PC-9 (cell line): ENCODE measurements at regions of chr17 and their contacts with region 1.

Region 1: GRCh38 chr17:39631403-39631802 is 4.7 kb downstream of the PPP1R1B start:
- DNase-seq: peak; percentile 25 to 56
- H3K4me3 ChIP-seq: peak overlapping the region; percentile 26; the same call in 1 of the 2 replicates
- H3K27ac ChIP-seq: peak overlapping the region; percentile 37; the same call in 1 of the 2 replicates
- H3K4me1 ChIP-seq: peaks cover 28% of the 10 kb centered on the region
- H3K27me3 ChIP-seq: no peaks in the 10 kb centered on the region
- CTCF ChIP-seq: no peak

Region 2: DNA sequence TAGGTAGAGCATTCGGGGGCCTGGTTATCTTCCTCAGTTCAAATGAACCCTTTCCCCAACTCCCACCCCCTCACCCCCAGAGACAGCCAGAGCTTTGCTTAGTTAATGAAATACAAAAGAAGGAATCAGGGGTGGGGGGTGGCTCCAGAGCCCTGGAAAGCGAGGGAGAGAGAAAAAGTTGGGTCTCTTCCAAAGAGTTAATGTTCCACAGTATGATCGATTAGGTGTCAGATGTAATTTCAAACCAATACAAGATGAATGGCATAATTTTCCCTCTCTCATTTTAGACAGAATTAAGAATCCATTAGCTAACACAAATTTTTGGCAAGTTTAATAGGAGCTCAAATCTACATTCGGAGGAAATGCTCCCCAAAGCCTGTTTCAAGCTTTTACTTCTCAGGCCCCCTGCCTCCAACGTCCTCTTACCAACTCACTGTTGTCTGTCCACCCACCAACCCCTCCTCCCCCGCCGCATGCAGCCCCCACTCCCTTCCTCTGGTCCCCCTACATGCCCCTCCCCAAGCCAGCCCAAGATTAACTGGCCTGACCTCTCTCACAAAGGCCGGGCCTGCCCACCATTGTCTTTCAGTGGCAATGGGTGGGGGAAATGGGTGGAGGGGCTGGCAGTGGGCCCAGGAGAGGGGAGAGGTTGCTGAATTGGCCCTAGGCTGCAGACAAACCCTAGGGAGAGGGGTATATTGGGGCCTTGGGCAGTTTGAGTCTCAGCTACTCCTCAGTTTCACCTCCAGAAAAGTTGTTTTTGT is 51.9 kb before region 1 on chr17:
- CTCF ChIA-PET with region 1: no interaction called
- POLR2A ChIA-PET with region 1: interaction called, 11 read pairs
- intact Hi-C with region 1: no loop called
- DNase-seq: no peak
- H3K4me3 ChIP-seq: no peak overlapping the region
- H3K27ac ChIP-seq: no peak overlapping the region
- H3K4me1 ChIP-seq: no peaks in the 10 kb centered on the region
- H3K27me3 ChIP-seq: peaks cover 17% of the 10 kb centered on the region; the same call in 1 of the 2 replicates
- CTCF ChIP-seq: no peak